ENCODE measurements at regions of chr9 and their contacts with region 1.

Region 1: GRCh38 chr9:34072868-34073590 is 24.3 kb upstream of the UBAP2 start:
- DNase-seq: no peak
- H3K4me3 ChIP-seq: no peak overlapping the region
- H3K27ac ChIP-seq: no peak overlapping the region
- H3K4me1 ChIP-seq: peaks cover 3% of the 10 kb centered on the region
- CTCF ChIP-seq: no peak

Region 2: GRCh38 chr9:34010979-34011378 is 62.0 kb before region 1 on chr9:
- CTCF ChIA-PET with region 1: no interaction called
- POLR2A ChIA-PET with region 1: no interaction called
- intact Hi-C with region 1: loop called (anchors 2 kb)
- DNase-seq: peak; percentile 64
- H3K4me3 ChIP-seq: no peak overlapping the region
- H3K27ac ChIP-seq: no peak overlapping the region
- H3K4me1 ChIP-seq: no peaks in the 10 kb centered on the region
- CTCF ChIP-seq: peak; percentile 85

Measured in OCI-LY7 (cell line).